ENCODE measurements at regions of chr16 and their contacts with region 1.

Region 1: DNA sequence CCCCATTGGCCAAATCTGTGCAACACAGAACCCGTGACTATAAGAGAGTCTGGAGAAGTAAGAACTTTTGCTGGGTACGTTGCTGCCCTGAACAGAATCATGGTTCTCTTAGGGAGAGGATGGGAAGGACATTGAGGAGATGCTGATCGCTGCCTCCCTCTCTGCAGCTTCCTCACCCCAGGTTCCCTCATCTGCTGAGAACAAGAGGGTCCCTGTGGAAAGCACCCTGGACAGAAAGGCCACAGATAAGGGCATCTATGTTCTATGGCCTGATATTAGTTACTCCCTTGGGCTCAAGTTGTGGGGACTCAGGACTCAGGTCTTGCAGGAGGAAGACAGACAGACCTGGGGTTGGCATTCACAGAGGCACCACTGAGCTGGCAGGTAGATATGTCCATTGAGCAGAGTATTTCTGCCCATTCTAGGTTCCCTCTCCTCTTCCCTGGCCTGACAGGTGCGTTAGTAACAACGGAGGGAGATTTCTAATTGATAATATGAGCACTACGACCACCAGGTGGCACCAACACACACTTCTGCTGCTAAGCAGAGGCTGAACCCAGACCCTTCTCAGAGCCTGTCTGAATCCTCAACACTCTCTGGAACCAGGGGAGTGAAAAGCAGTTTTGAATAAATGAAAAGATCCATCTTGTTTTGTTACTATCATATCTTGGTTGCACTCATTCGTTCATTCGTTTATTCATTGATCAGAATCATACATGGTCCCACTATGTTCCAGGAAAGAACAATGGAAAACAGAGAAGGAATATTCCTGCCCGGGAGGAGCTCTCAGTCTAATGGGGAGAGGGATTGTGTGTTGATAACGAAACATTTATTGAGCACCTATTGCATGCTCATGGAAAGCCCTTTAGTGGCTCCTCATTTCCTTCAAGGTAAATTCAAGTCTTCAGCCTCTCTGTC is 56.4 kb downstream of the SLC6A2 start:
- DNase-seq: no peak
- H3K4me3 ChIP-seq: no peak overlapping the region
- H3K27ac ChIP-seq: no peak overlapping the region
- H3K4me1 ChIP-seq: no peaks in the 10 kb centered on the region
- H3K27me3 ChIP-seq: peaks cover 0 to 46% (median 0%) of the 10 kb centered on the region in 4 donors
- CTCF ChIP-seq: peak; percentile 56 to 65 (median 64)
- EP300 ChIP-seq: no peak
- POLR2A ChIP-seq: no peak

Region 2: GRCh38 chr16:55842369-55843104 is 130.3 kb after region 1 on chr16:
- intact Hi-C with region 1: loop called (anchors 1 kb)
- DNase-seq: no peak
- H3K4me3 ChIP-seq: no peak overlapping the region
- H3K27ac ChIP-seq: no peak overlapping the region
- H3K4me1 ChIP-seq: no peaks in the 10 kb centered on the region
- H3K27me3 ChIP-seq: peaks cover 0 to 38% (median 3%) of the 10 kb centered on the region in 4 donors
- CTCF ChIP-seq: peak; percentile 78 to 82 (median 80)
- EP300 ChIP-seq: no peak
- POLR2A ChIP-seq: no peak

Measured in esophagus muscularis mucosa (tissue), 4 donors.